AG04450 (cell line): ENCODE measurements at regions of chr9 and their contacts with region 1.

Region 1: DNA sequence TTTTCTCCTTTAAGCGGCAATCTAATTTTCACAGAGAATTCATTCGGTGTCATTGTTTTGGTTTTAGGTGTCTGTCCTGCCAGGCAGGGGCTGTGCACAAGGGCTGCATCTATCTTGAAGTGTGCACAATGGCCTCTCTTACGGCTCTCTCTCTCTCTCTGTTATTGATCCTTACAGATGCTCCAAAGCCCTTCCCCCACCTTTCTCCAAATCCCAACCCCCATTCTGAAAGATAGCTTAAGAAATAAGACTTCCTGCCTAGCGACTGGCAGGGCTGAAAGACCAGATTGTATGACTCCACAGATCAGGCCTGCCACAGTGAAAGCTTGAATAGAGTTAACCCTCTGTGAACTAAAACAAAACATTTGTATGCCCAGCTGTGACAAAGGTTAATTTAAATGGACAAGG is 86.5 kb upstream of the NR5A1 start:
- DNase-seq: no peak
- H3K4me3 ChIP-seq: no peak overlapping the region
- H3K27ac ChIP-seq: no peak overlapping the region
- H3K27me3 ChIP-seq: no peaks in the 10 kb centered on the region
- CTCF ChIP-seq: no peak

Region 2: DNA sequence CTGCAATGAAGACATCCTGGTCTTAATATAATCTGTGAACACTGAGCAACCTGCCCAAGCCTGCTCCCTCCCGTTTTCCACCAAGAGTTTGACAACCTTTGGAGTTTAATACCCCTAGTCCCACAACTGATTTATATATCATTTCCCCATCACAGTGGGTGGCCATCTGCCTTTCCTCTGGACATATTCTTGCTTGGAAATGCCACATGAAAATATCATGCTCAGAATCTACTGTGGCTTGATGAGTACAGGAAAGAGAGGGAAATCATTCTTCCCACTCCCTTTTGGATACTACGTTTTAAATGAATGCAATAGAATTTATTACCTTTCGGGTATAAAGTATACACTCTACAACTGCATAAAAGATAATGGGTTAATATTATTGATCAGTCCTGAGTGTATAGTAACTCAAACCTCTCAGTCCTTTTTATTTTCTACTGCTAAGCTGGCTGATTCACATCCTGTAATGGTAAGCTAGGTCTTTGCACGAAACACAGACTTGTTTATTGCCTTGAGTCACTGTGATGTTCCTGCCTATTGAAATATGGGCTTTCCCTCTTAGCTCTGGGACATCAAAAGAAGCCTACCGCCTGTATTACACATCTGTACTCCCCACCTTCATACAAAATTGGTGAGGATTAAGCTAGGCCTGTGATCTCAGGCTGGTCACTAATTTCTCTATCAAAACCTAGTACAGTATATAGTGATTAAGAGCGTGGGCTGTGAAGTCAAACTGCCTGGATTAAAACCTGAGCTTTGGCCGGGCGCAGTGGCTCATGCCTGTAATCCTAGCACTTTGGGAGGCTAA is 18.9 kb before region 1 on chr9:
- CTCF ChIA-PET with region 1: no interaction called
- POLR2A ChIA-PET with region 1: interaction called, 10 read pairs
- DNase-seq: peak; percentile 43
- H3K4me3 ChIP-seq: no peak overlapping the region
- H3K27ac ChIP-seq: no peak overlapping the region
- H3K27me3 ChIP-seq: no peaks in the 10 kb centered on the region
- CTCF ChIP-seq: no peak